GM13977 (cell line): ENCODE measurements at regions of chr14 and their contacts with region 1.

Region 1: DNA sequence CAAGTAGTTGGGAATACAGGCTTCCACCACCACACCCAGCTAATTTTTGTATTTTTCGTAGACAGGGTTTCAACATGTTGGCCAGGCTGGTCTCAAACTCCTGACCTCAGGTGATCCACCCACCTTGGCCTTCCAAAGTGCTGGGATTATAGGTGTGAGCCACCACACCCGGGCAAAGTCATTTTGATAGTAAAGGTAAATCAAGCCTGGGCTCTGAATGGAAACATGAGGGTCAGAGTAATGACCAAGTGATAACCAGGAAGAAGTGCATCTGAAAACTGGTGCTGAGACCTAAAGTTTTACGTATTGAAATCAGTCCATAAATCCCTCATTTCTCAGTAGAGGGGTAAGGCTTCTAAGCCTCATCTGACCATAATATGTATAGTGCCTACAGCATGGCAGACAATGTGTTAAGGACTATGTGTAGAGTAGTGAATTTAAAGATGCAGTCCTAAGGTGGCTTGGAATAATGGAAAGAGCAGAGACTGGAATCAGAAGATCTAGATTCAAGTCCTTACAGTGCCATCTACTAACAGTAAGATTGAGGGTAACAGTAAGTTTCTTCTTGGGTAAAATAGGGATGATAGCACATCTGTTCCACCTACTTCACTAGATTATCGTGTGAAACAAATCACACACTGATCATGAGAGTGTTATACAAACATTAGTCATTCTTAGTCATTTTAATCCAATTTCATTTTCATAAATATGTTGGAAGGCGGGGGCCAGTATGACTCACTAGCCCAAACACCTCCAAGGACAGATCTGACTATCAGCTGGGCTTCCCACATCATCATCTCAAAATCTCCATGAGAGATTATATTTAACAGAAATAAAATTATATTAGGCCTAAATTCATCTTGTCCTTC is 11.2 kb downstream of the MAP4K5 start:
- DNase-seq: peak; percentile 51
- CTCF ChIP-seq: no peak

Region 2: DNA sequence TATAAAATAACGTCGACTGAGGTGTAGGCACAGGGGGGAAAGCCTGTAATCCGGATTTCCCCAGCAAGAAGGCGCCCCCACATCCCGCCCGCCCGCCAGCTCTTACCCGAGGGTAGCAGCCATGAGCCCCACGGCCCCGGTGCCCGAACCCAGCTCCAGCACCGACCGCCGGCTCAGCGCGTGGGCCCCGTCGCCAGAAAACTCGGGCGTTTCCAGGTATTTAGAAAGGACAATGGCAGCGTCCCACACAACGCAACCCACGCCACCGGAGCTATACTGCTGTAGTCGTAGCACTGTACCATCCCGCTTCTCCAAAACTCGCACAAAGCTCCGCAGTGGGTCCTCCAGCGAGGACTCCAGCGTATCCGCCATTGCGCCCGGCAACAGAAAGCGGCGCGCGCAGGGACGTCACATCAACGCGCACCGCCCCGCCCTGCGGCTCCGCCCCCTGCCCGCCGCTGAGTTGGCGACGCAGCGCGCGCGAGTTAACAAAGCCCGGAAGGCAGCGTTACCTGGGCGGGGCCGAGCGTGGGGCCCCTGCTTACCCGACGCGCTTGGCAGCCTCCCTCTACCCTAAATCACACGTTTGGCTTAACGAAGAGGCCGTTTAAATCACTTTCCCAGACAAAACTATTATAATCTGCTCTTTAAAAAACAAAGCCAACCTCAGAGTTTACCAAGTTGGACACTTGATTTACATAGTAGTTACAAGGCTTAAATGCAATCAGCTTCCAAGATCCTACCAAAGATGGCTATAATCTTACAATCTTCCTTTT is 404.8 kb before region 1 on chr14 and contains the start of gene VCPKMT:
- in situ Hi-C with region 1: loop called (anchors 10 kb)
- DNase-seq: peak; percentile 92
- CTCF ChIP-seq: no peak

Region 3: GRCh38 chr14:50321009-50321660 is 200.0 kb before region 1 on chr14:
- in situ Hi-C with region 1: loop called (anchors 10 kb)
- DNase-seq: peak; percentile 71
- CTCF ChIP-seq: peak; percentile 76

Region 4: DNA sequence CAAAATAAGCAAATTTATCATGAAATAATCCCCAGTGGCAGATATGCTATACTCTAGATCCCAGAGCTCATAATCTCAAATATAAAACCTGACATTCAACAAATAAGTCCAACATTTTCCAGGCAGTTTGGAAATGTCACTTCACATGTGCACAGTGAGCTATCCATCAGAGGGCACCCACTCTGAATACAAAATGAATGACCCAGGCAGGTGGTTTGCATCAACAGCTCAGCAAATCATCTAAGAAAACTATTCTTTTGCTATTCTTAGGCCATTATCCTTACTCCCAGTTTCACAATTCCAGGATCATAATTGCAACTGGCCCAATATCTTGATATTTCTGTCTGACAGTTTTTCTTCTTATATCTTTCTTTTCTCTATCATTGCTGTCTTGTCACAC is 535.2 kb after region 1 on chr14:
- in situ Hi-C with region 1: no loop called
- DNase-seq: no peak
- CTCF ChIP-seq: no peak